Activated CD4-positive, alpha-beta memory T cell treated with anti-CD3 and anti-CD28 coated beads for 36 hours (primary cell): ENCODE measurements at regions of chr3 and their contacts with region 1.

Region 1: DNA sequence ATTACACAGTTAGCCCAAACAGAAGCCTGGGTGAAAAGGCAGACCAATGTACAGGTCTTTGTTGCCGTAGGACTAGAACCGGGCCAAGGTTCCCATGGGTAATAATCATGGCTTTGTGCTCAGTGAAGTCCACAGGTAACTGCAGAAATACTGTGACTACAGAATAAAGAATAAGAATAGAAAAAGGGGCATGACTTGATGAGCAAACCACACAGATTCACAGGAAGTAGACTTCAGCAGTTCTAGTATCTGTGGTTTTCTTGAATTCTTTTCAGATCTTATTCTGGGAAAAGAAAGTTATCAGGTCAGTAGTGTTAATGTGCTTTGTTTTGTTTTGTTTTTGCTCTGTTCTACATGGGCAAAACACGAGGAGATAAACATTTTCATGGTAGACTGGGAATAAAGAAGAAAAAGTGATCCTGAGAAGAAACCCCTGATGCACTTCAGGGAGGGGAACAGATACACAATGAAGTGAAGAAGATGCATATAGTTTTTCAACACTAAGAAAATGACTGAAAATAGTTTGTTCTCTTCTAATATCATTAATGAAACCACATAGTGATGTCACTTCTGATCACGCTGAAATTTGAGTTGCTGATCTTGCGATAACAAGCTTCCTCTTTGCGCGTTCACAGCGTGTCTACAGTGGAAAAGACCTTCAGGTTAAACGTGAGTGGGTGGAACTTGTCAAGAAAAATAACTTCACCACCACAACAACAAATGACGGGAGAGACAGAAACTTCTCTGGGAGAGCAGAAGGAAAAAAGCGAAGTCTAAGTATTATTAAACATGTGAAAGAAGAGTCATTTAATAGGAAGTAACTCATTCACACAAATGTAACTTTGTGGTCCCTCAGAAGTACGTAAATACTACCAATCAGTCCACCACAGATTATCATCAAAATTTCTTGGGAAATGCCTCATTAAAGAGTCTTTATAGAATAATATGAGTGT is 315.8 kb upstream of the SATB1 start:
- DNase-seq: peak; percentile 76
- H3K4me3 Mint-ChIP-seq: peak overlapping the region; percentile 36
- H3K27ac Mint-ChIP-seq: peak overlapping the region; percentile 92
- H3K4me1 Mint-ChIP-seq: peaks cover 92% of the 10 kb centered on the region
- H3K27me3 Mint-ChIP-seq: no peaks in the 10 kb centered on the region

Region 2: GRCh38 chr3:18424729-18425640 is 315.9 kb before region 1 on chr3 and contains the start of gene SATB1:
- CTCF ChIA-PET with region 1: no interaction called
- POLR2A ChIA-PET with region 1: interaction called, 10 read pairs
- intact Hi-C with region 1: loop called (anchors 2 kb)
- DNase-seq: peak; percentile 78
- H3K4me3 Mint-ChIP-seq: peak within 1 kb of the TSS; percentile 86
- H3K27ac Mint-ChIP-seq: peak within 1 kb of the TSS; percentile 84
- H3K4me1 Mint-ChIP-seq: peaks cover 74% of the 10 kb centered on the region
- H3K27me3 Mint-ChIP-seq: no peaks in the 10 kb centered on the region
- total RNA-seq, gene SATB1: 546 to 561 TPM

Region 3: DNA sequence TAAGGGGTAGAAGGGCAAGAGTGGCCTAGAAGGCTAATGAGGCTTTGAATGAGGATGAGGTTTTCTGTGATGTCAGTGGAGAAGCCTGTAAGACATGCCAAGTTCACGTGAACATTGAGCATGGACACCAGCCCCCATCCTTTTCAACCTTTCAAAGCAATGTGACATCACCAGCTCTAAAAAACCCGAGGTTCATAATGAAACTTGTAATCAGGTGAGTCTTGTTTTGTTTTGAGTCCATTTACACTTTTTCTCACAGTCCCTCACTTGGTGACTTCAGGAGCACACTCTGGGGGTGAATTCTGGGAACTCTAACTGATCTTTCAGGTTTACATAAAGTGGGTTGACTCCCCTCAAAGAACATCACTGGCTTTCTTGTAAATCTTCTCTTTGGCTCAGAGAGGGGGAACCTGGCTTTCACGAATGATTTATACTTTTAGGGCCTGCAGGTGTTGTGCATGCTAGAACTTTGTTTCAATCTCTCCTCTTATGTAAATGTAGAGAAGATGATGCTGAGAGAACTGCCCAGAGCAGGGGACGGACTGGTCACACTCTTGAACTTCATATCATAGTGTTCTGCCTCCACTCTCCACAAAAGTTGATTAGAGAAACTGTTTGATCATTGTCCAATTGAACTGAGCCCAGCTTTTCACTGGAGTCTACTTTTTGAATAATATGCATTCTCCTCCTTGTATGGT is 91.1 kb before region 1 on chr3:
- CTCF ChIA-PET with region 1: interaction called, 6 read pairs
- POLR2A ChIA-PET with region 1: interaction called, 42 read pairs
- intact Hi-C with region 1: loop called (anchors 1 kb)
- DNase-seq: peak; percentile 76
- H3K4me3 Mint-ChIP-seq: peak overlapping the region; percentile 30
- H3K27ac Mint-ChIP-seq: peak overlapping the region; percentile 98
- H3K4me1 Mint-ChIP-seq: peaks cover 89% of the 10 kb centered on the region
- H3K27me3 Mint-ChIP-seq: no peaks in the 10 kb centered on the region

Region 4: DNA sequence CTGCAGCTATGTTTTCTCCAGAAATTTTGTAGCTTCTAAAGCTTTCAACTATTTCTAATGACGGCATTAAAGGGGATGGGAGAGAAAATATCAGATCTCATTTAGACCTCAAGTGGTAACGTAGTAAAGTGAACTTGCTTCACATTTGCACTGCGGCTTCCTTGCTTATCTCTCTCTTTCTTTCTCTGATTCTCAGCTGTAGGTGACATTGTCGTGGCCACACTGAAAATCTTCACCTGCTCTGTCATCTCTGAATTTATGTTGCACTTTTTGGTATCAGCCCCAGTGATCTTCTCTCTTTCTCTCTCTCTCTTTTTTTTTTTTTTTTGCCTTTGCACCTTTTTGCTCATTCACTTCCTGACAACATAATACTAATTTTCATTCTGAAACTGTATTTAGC is 61.7 kb before region 1 on chr3:
- CTCF ChIA-PET with region 1: interaction called, 9 read pairs
- POLR2A ChIA-PET with region 1: interaction called, 20 read pairs
- intact Hi-C with region 1: loop called (anchors 1 kb)
- DNase-seq: peak; percentile 75
- H3K4me3 Mint-ChIP-seq: peak overlapping the region; percentile 53
- H3K27ac Mint-ChIP-seq: peak overlapping the region; percentile 90
- H3K4me1 Mint-ChIP-seq: peaks cover 81% of the 10 kb centered on the region
- H3K27me3 Mint-ChIP-seq: no peaks in the 10 kb centered on the region

Region 5: DNA sequence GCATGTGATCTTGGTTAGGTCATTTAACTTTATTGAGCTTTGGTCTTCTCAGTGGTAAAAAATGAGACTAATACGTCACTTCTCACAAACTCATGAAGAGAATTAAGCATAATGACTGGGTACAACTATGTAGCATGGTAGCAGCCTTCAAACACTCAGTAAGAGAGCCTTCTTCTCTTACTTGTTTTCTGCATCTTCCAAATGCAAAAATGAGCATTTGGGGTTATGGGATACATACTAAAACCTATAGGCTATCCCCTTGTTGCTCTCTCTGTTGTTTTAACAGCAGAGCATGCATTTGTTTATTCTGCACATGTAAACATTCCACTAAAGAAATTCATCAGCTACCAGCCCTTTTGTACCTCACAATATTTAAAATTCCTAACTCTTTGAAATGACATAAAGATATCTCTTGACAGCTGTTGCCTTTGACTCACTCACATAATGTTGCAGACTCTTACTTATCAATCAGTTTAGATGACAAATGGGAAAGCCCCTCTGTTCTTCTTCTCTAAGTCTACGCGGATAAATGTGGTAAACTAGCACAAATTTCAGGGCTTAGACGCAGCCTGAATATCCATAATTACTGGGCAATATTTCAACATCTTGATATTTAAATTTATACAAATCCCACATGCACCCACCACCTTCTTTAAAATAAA is 11.5 kb after region 1 on chr3:
- CTCF ChIA-PET with region 1: interaction called, 12 read pairs
- POLR2A ChIA-PET with region 1: no interaction called
- intact Hi-C with region 1: loop called (anchors 1 kb)
- DNase-seq: no peak
- H3K4me3 Mint-ChIP-seq: no peak overlapping the region
- H3K27ac Mint-ChIP-seq: no peak overlapping the region
- H3K4me1 Mint-ChIP-seq: peaks cover 61% of the 10 kb centered on the region
- H3K27me3 Mint-ChIP-seq: no peaks in the 10 kb centered on the region

Region 6: DNA sequence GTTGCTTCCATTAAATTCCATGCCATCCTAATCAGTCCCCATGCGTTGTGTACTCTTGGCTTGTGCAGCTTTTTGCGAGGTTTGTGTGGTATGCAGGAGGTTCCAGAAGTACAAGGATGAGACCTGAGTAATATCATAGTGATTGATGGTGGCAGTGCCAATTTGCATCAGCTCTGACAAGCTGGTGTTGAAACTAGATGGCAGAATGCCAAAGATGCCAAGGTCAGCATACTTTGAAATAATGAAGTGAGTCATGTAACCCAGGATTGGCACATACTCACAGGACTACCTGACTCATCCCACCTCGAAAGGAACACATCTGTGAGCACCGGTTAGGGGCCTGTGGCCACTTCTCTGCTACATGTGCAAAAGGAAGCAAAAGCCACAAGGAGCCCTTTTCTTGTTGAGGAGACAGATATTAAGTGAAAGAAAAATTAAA is 1313.7 kb after region 1 on chr3:
- CTCF ChIA-PET with region 1: no interaction called
- POLR2A ChIA-PET with region 1: no interaction called
- intact Hi-C with region 1: loop called (anchors 10 kb)
- DNase-seq: peak; percentile 88
- H3K4me3 Mint-ChIP-seq: no peak overlapping the region
- H3K27ac Mint-ChIP-seq: no peak overlapping the region
- H3K4me1 Mint-ChIP-seq: peaks cover 39% of the 10 kb centered on the region
- H3K27me3 Mint-ChIP-seq: no peaks in the 10 kb centered on the region